Activated CD4-positive, alpha-beta T cell treated with anti-CD3 and anti-CD28 coated beads for 36 hours (primary cell): ENCODE measurements at regions of chr11 and their contacts with region 1.

Region 1: GRCh38 chr11:128488471-128488870 is 98.9 kb downstream of the ETS1 start:
- DNase-seq: peak; percentile 65
- ATAC-seq: peak; percentile 65
- H3K4me3 Mint-ChIP-seq: peak overlapping the region; percentile 48
- H3K27ac Mint-ChIP-seq: peak overlapping the region; percentile 89
- H3K4me1 Mint-ChIP-seq: peaks cover 98% of the 10 kb centered on the region
- H3K27me3 Mint-ChIP-seq: no peaks in the 10 kb centered on the region

Region 2: GRCh38 chr11:128232588-128232987 is 255.9 kb before region 1 on chr11:
- CTCF ChIA-PET with region 1: interaction called, 3 read pairs
- POLR2A ChIA-PET with region 1: no interaction called
- intact Hi-C with region 1: loop called in 1 of 2 experiments (anchors 5 kb)
- DNase-seq: peak; percentile 81
- ATAC-seq: peak; percentile 63
- H3K4me3 Mint-ChIP-seq: no peak overlapping the region
- H3K27ac Mint-ChIP-seq: peak overlapping the region; percentile 92
- H3K4me1 Mint-ChIP-seq: peaks cover 60% of the 10 kb centered on the region
- H3K27me3 Mint-ChIP-seq: no peaks in the 10 kb centered on the region

Region 3: GRCh38 chr11:128506999-128507611 is 18.6 kb after region 1 on chr11:
- CTCF ChIA-PET with region 1: interaction called, 26 read pairs
- POLR2A ChIA-PET with region 1: interaction called, 6 read pairs
- intact Hi-C with region 1: loop called in 1 of 2 experiments (anchors 2 kb)
- DNase-seq: peak; percentile 80
- ATAC-seq: peak; percentile 58
- H3K4me3 Mint-ChIP-seq: peak overlapping the region; percentile 96
- H3K27ac Mint-ChIP-seq: peak overlapping the region; percentile 98
- H3K4me1 Mint-ChIP-seq: peaks cover 89% of the 10 kb centered on the region
- H3K27me3 Mint-ChIP-seq: no peaks in the 10 kb centered on the region